AG04449 (cell line): ENCODE measurements at regions of chr3 and their contacts with region 1.

Region 1: DNA sequence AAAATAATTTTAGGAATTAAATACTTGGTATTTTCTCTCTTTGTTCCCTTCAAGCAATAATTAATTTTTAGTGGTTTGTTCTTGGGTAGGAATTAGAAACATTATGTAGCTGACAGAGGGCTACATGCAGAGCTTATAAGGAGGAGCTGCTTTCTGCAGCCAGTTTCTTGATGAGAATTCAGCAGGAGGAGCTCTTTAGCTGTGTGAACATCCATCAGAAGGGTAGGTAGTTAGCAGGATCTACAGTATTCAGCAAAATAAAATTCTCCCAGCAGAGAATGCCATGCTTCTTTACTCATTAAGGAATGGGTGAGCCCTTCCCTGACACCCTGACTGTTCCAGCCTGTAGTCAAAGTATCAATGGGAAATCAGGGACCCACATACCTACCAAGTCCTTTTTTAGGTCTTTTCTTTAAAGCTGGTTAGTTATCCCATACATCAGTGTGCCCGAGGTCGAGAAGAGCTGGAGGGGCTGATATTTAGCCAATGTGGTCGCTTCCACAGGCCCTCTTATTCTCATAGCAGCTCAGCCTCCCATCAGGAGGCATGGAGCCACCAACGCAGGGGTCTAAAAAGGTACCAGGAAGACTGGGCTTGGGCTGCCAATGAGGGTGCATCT is 54.0 kb downstream of the KCNAB1 start:
- DNase-seq: no peak
- H3K4me3 ChIP-seq: no peak overlapping the region
- CTCF ChIP-seq: peak; percentile 59

Region 2: GRCh38 chr3:156106721-156107373 is 67.5 kb before region 1 on chr3:
- CTCF ChIA-PET with region 1: no interaction called
- POLR2A ChIA-PET with region 1: no interaction called
- DNase-seq: no peak
- H3K4me3 ChIP-seq: no peak overlapping the region
- CTCF ChIP-seq: no peak

Region 3: DNA sequence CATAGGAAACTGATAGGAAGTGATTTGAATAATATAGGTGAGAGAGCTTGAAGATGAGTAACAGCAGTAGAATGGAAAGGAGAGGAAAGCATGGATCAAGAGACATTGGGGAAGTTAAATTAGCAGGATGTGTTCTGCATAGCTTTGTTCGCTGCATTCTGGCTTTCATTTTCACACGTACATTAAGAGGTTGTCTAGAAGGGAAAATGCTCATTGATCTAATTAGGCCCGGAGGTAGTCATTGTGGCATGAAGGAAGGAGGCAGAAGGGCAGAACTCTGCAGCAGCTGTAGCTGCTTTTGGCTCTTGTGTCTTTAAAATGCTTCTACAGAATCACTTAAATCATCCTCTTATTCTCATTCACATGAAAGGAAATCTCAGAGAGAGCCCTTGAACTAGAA is 13.7 kb before region 1 on chr3:
- CTCF ChIA-PET with region 1: interaction called, 32 read pairs
- POLR2A ChIA-PET with region 1: no interaction called
- DNase-seq: no peak
- H3K4me3 ChIP-seq: no peak overlapping the region
- CTCF ChIP-seq: no peak

Region 4: DNA sequence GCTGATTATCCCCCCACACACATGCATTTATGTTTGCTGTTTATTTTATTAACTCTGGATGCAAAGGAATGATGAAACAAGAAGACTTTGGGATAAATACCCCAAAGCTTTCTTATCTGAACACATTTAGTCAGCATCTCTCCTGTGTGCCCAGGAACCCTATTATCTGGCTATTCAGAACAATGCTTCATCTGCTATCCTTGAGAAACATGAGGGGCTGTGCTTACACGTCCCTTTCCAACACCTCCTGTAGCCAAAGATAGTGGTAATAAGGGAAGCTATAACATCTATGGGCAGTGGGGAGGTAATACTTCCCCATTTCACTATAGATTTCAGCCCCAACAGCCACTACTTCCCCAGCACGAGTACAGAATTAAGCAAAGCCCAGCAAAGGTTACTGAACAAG is 285.9 kb after region 1 on chr3:
- CTCF ChIA-PET with region 1: interaction called, 10 read pairs
- POLR2A ChIA-PET with region 1: no interaction called
- DNase-seq: no peak
- H3K4me3 ChIP-seq: no peak overlapping the region
- CTCF ChIP-seq: no peak

Region 5: GRCh38 chr3:156474560-156475389 is 300.4 kb after region 1 on chr3:
- CTCF ChIA-PET with region 1: interaction called, 10 read pairs
- POLR2A ChIA-PET with region 1: no interaction called
- DNase-seq: no peak
- H3K4me3 ChIP-seq: no peak overlapping the region
- CTCF ChIP-seq: peak; percentile 14

Region 6: DNA sequence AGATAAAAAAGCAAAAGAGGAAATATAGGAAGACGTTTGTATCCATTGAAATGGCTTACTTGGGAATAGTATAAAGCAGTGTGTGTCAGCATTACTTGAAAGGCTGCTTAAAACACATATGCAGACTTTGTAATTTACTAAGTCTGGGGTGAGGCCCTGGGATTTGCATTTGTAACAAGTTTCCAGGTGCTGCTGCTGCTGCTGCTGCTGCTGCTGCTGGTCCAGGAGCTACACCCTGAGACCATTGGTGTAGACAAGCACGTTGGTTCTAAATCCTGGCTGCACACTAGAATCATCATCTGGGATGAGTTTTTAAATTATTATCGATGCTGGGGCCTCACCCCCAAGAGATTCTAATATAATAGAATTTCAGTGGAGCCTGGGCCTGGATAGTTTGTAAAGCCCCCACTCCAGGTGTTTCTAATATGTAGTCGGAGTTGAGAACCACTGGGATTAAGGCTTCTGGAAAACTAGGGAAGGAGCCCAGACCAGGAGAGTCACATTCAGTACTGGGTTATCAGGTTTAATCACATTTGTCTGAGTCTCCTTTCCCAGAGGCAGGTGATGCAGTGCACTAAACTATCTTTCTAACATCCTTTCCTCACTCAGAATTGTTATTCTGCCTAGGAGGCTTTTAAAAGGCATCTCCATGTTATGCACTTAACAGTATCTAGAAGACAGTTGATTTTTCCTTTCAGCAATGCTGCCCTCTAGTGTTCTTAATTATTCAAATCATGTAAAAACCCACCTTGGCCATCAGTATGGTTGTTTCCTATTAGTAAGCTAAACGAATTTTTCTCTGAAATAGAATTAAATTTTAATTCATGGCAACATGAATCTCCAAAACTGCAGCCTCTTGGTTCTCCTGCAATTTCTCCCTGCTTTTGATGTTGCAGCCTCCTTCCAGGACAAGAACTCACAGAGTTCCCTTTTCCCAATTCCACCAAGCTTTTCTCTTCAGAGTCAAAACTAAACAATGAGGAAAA is 335.1 kb after region 1 on chr3:
- CTCF ChIA-PET with region 1: interaction called, 277 read pairs
- POLR2A ChIA-PET with region 1: interaction called, 4 read pairs
- DNase-seq: no peak
- H3K4me3 ChIP-seq: no peak overlapping the region
- CTCF ChIP-seq: peak; percentile 29

Region 7: GRCh38 chr3:156535162-156535627 is 360.9 kb after region 1 on chr3:
- CTCF ChIA-PET with region 1: interaction called, 18 read pairs
- POLR2A ChIA-PET with region 1: interaction called, 3 read pairs
- DNase-seq: peak; percentile 97
- H3K4me3 ChIP-seq: no peak overlapping the region
- CTCF ChIP-seq: peak; percentile 29

Region 8: DNA sequence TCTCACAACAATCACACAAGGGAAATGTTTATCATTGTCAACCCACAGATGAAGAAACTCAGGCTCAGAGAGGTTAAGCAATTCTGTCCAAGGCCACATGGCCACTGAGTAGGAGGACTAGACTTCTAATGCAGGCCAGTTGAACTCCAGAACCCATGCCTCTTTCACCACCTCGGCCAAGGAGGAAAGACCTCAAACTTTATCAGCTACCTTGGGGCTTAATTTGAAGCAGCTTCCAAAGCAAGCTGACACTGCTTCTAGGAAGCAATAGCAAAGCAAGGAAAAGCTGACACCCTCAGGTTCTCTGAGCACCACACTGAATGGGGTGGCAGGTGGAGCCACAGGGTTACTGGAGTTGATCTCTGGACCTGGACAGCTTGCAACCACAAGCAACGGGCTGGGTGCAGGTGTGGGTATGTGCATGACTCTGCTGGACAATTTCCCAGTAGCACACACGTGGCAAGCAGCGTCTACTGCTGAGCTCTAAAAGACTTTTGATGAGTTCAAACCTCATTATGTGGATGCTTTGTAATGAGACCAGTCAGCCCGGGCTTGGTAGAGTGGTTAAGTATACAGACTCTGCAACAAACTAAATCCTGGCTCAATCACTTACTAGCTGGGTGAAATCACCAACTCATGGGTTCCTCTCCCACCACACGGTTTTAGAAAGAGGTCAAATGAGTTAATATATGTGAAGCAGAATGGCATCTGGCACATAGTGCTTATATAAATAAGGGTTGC is 962.5 kb after region 1 on chr3:
- CTCF ChIA-PET with region 1: interaction called, 15 read pairs
- POLR2A ChIA-PET with region 1: no interaction called
- DNase-seq: no peak
- H3K4me3 ChIP-seq: no peak overlapping the region
- CTCF ChIP-seq: no peak